MCF 10A (cell line): ENCODE measurements at regions of chr19 and their contacts with region 1.

Region 1: DNA sequence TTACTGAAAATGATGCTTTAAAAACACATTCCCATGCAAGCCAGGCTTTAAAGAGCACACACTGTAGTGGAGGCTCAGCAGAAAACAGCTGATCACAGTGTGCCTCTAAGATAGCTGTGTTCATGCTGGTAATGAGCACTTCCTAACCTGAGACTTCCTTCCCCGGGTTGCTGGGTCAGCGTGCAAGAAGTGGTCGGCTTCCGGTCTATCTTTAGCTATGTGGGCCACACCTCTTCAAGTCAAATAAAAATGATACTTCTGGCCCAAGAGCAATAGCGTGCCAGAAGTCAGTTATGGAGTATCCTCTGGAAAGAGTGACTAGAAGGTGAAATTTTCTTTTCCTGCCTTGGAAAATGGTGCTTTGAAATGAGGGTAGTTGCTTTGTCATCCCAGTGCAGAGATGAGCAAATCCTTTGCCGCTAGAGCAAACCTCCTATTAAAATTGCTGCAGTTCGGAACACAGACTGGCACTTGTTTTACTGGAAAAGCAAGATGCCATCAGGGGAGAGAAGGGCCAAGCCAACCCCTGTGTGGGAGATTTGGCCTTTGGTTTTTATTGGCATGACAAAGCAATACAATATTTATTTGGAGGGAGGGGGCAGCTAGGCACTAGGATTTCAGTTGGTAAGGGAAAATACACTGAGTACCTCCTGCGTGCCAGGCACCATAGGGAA is 64.2 kb downstream of the ARHGAP35 start:
- DNase-seq: peak; percentile 22
- H3K4me3 Mint-ChIP-seq: peak overlapping the region; percentile 51
- H3K27ac Mint-ChIP-seq: peak overlapping the region; percentile 70
- H3K4me1 Mint-ChIP-seq: peaks cover 40% of the 10 kb centered on the region
- H3K27me3 Mint-ChIP-seq: no peaks in the 10 kb centered on the region
- CTCF ChIP-seq: no peak

Region 2: DNA sequence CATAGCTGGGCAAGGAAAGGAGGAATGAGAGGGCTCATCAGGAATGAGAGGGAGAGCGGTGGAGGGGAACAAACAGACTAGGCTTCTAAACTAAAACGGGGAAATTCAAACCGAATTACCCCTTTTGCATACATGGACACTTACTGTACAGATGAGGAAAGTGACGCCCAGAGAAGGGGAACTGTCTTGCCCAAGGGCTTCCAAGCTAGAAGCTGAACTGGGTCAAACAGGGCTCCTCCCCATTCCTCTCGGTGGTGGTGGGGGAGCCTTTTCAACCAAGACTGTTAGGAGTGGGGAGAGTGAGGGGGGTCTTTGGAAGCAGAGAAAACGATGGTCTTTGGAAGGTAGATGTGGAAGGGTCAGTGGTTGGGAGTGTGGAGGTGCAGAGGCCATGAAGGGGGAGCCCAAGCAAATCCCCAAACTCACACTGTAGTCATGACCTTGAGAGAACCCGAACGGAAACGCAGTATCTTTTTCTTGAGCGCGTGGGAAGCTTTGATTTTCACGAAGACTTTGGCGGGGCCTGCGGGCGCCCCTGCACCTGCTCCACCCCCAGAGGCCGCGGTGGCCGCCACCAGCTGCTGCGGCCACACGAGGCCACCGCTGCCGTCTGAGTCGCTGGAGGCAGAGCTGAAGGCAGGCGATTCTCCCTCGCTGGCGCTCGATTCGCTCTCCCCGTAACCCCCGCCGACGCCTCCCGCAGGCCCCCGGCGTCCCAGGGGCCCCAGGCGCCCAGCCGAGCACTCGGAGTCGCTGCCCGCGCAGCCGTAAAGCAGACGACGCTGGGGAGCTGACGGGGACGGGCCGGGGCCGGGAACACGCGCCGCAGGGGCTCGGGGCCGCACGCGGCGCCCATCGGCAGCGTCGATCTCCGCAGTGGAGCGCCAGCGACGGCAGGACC is 276.7 kb before region 1 on chr19:
- CTCF ChIA-PET with region 1: no interaction called
- POLR2A ChIA-PET with region 1: no interaction called
- intact Hi-C with region 1: no loop called
- DNase-seq: no peak
- H3K4me3 Mint-ChIP-seq: no peak overlapping the region
- H3K27ac Mint-ChIP-seq: no peak overlapping the region
- H3K4me1 Mint-ChIP-seq: no peaks in the 10 kb centered on the region
- H3K27me3 Mint-ChIP-seq: peaks cover 13% of the 10 kb centered on the region
- CTCF ChIP-seq: no peak

Region 3: GRCh38 chr19:46860125-46860845 is 64.7 kb before region 1 on chr19:
- CTCF ChIA-PET with region 1: interaction called, 4 read pairs
- POLR2A ChIA-PET with region 1: interaction called, 59 read pairs
- intact Hi-C with region 1: loop called (anchors 2 kb)
- DNase-seq: peak; percentile 99
- H3K4me3 Mint-ChIP-seq: no peak overlapping the region
- H3K27ac Mint-ChIP-seq: peak overlapping the region; percentile 71
- H3K4me1 Mint-ChIP-seq: peaks cover 11% of the 10 kb centered on the region
- H3K27me3 Mint-ChIP-seq: no peaks in the 10 kb centered on the region
- CTCF ChIP-seq: no peak

Region 4: GRCh38 chr19:46875234-46875633 is 49.8 kb before region 1 on chr19:
- CTCF ChIA-PET with region 1: interaction called, 3 read pairs
- POLR2A ChIA-PET with region 1: interaction called, 21 read pairs
- intact Hi-C with region 1: no loop called
- DNase-seq: no peak
- H3K4me3 Mint-ChIP-seq: peak overlapping the region; percentile 33
- H3K27ac Mint-ChIP-seq: peak overlapping the region; percentile 84
- H3K4me1 Mint-ChIP-seq: peaks cover 11% of the 10 kb centered on the region
- H3K27me3 Mint-ChIP-seq: no peaks in the 10 kb centered on the region
- CTCF ChIP-seq: no peak

Region 5: GRCh38 chr19:46907880-46908279 is 17.1 kb before region 1 on chr19:
- CTCF ChIA-PET with region 1: interaction called, 3 read pairs
- POLR2A ChIA-PET with region 1: interaction called, 16 read pairs
- intact Hi-C with region 1: no loop called
- DNase-seq: no peak
- H3K4me3 Mint-ChIP-seq: no peak overlapping the region
- H3K27ac Mint-ChIP-seq: no peak overlapping the region
- H3K4me1 Mint-ChIP-seq: peaks cover 30% of the 10 kb centered on the region
- H3K27me3 Mint-ChIP-seq: no peaks in the 10 kb centered on the region
- CTCF ChIP-seq: no peak

Region 6: GRCh38 chr19:46954993-46955812 is 30.2 kb after region 1 on chr19:
- CTCF ChIA-PET with region 1: no interaction called
- POLR2A ChIA-PET with region 1: interaction called, 15 read pairs
- intact Hi-C with region 1: no loop called
- DNase-seq: no peak
- H3K4me3 Mint-ChIP-seq: no peak overlapping the region
- H3K27ac Mint-ChIP-seq: no peak overlapping the region
- H3K4me1 Mint-ChIP-seq: peaks cover 28% of the 10 kb centered on the region
- H3K27me3 Mint-ChIP-seq: no peaks in the 10 kb centered on the region
- CTCF ChIP-seq: no peak

Region 7: DNA sequence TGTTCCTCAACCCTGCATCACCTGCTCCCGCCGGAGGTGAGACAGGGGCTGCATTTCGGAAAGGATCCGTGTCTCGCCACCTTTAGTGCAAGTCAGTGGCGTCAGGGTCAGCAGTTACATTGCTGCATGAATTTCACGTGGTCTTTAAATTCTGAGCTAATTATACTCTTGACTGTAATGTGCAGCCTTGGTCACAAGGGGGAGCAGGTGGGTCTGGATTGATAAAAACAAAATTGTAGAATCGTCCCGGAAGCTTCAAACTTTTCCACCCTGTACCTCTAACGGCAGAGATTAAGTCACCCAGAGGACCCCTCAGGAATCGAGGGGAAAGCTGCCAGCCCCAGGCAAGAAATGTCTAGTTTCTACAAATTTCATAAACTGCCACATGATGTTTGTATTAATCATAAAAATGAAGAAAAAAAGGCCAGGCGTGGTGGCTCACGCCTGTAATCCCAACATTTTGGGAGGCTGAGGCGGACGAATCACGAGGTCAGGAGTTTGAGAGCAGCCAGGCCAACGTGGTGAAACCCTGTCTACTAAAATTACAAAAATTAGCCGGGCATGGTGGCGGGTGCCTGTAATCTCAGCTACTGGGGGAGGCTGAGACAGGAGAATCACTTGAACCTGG is 285.8 kb after region 1 on chr19:
- CTCF ChIA-PET with region 1: no interaction called
- POLR2A ChIA-PET with region 1: no interaction called
- intact Hi-C with region 1: no loop called
- DNase-seq: peak; percentile 86
- H3K4me3 Mint-ChIP-seq: peak overlapping the region; percentile 31
- H3K27ac Mint-ChIP-seq: peak overlapping the region; percentile 88
- H3K4me1 Mint-ChIP-seq: peaks cover 7% of the 10 kb centered on the region
- H3K27me3 Mint-ChIP-seq: no peaks in the 10 kb centered on the region
- CTCF ChIP-seq: peak; percentile 77